Gastrocnemius medialis (tissue), 4 donors: ENCODE measurements at regions of chr11 and their contacts with region 1.

Region 1: GRCh38 chr11:122439911-122440810 is 215.4 kb upstream of the UBASH3B start:
- DNase-seq: peak; percentile 50 to 67
- ATAC-seq: peak; percentile 81 to 84
- H3K4me3 ChIP-seq: peak overlapping the region; percentile 51 to 64 (median 56)
- H3K27ac ChIP-seq: peak overlapping the region; percentile 53 to 80 (median 68)
- H3K4me1 ChIP-seq: peaks cover 23 to 30% of the 10 kb centered on the region in 2 donors
- H3K27me3 ChIP-seq: no peaks in the 10 kb centered on the region
- CTCF ChIP-seq: no peak
- POLR2A ChIP-seq: no peak

Region 2: GRCh38 chr11:122197055-122197987 is 242.8 kb before region 1 on chr11:
- in situ Hi-C with region 1: no loop called
- intact Hi-C with region 1: no loop called
- DNase-seq: no peak
- ATAC-seq: no peak
- H3K4me3 ChIP-seq: no peak overlapping the region
- H3K27ac ChIP-seq: no peak overlapping the region
- H3K4me1 ChIP-seq: peaks cover 0 to 17% of the 10 kb centered on the region in 2 donors
- H3K27me3 ChIP-seq: no peaks in the 10 kb centered on the region
- CTCF ChIP-seq: no peak
- POLR2A ChIP-seq: no peak

Region 3: DNA sequence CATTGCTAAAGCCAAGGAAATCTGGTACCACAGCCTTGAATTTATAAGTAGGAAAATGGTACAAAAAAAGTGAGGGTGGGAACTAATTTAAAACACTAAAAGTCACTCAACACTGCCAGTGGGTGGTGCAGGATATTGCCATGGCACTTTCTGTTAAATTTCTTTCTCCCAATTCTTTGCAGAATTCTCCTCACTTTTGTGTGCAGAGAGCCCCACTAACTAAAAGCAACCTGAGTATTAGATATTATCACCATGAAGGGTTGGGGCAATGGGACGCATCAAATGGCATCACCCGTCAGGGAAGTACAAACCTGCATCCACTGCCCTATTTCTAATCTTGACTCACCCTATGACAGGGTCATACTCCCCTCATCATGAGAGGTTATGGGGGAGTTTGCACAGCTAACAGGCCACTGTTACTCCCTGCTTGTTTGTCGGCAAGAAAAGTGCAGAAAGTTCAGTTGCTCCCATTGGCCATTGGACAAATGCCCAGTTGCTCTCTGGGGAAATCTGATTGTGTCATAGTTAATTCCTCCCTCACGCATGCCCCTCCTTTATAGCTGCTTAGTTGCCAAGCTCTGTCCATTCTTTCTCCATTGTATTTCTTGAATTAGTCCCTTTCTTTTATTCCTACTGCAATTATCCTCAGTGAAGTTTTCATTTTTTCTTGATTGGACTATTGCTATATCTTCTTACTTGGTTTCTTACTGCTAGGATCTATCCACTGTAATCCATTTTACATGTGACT is 230.4 kb before region 1 on chr11:
- in situ Hi-C with region 1: no loop called
- intact Hi-C with region 1: loop called (anchors 5 kb)
- DNase-seq: peak; percentile 48 to 58
- ATAC-seq: peak; percentile 79 to 86
- H3K4me3 ChIP-seq: no peak overlapping the region
- H3K27ac ChIP-seq: peak overlapping the region in 3 of 4 donors; percentile 24 to 44 (median 32)
- H3K4me1 ChIP-seq: peaks cover 30 to 35% of the 10 kb centered on the region in 2 donors
- H3K27me3 ChIP-seq: no peaks in the 10 kb centered on the region
- CTCF ChIP-seq: no peak
- POLR2A ChIP-seq: no peak

Region 4: GRCh38 chr11:122309262-122309925 is 130.8 kb before region 1 on chr11:
- in situ Hi-C with region 1: no loop called
- intact Hi-C with region 1: loop called (anchors 5 kb)
- DNase-seq: peak; percentile 20 to 28
- ATAC-seq: peak; percentile 93 to 95
- H3K4me3 ChIP-seq: peak overlapping the region; percentile 40 to 56 (median 46)
- H3K27ac ChIP-seq: peak overlapping the region; percentile 62 to 78 (median 74)
- H3K4me1 ChIP-seq: peaks cover 18 to 21% of the 10 kb centered on the region in 2 donors
- H3K27me3 ChIP-seq: no peaks in the 10 kb centered on the region
- CTCF ChIP-seq: no peak
- POLR2A ChIP-seq: no peak

Region 5: GRCh38 chr11:122463530-122463929 is 23.4 kb after region 1 on chr11:
- in situ Hi-C with region 1: no loop called
- intact Hi-C with region 1: no loop called
- DNase-seq: no peak
- ATAC-seq: no peak
- H3K4me3 ChIP-seq: no peak overlapping the region
- H3K27ac ChIP-seq: no peak overlapping the region
- H3K4me1 ChIP-seq: no peaks in the 10 kb centered on the region
- H3K27me3 ChIP-seq: no peaks in the 10 kb centered on the region
- CTCF ChIP-seq: no peak
- POLR2A ChIP-seq: no peak

Region 6: DNA sequence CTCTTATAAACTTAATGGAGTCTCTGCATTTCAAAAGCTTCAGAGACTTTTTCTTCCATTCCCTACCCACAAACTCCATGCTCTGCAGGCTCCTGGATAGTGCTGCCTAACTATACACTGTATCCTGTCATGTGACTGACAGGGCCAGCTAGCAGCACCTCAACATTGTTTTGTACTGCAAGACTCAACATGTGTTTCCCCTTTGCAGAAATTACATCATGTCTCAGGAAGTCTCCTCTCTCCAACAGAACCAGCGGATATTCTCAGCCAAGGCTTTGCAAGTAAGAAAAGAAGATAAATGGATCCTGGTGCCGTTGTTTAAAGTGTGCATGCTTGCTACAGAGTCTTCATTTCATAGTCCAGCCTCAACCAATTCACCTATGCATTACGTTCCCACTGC is 51.3 kb after region 1 on chr11:
- in situ Hi-C with region 1: no loop called
- intact Hi-C with region 1: loop called (anchors 5 kb)
- DNase-seq: no peak
- ATAC-seq: peak in 1 of 2 donors; percentile 18
- H3K4me3 ChIP-seq: no peak overlapping the region
- H3K27ac ChIP-seq: no peak overlapping the region
- H3K4me1 ChIP-seq: peaks cover 15 to 28% of the 10 kb centered on the region in 2 donors
- H3K27me3 ChIP-seq: no peaks in the 10 kb centered on the region
- CTCF ChIP-seq: no peak
- POLR2A ChIP-seq: no peak

Region 7: GRCh38 chr11:122523846-122524805 is 84.0 kb after region 1 on chr11:
- in situ Hi-C with region 1: no loop called
- intact Hi-C with region 1: no loop called
- DNase-seq: no peak
- ATAC-seq: no peak
- H3K4me3 ChIP-seq: no peak overlapping the region
- H3K27ac ChIP-seq: no peak overlapping the region
- H3K4me1 ChIP-seq: no peaks in the 10 kb centered on the region
- H3K27me3 ChIP-seq: no peaks in the 10 kb centered on the region
- CTCF ChIP-seq: no peak
- POLR2A ChIP-seq: no peak